Heart right ventricle (tissue), 16 donors: ENCODE measurements at regions of chr4 and their contacts with region 1.

Region 1: DNA sequence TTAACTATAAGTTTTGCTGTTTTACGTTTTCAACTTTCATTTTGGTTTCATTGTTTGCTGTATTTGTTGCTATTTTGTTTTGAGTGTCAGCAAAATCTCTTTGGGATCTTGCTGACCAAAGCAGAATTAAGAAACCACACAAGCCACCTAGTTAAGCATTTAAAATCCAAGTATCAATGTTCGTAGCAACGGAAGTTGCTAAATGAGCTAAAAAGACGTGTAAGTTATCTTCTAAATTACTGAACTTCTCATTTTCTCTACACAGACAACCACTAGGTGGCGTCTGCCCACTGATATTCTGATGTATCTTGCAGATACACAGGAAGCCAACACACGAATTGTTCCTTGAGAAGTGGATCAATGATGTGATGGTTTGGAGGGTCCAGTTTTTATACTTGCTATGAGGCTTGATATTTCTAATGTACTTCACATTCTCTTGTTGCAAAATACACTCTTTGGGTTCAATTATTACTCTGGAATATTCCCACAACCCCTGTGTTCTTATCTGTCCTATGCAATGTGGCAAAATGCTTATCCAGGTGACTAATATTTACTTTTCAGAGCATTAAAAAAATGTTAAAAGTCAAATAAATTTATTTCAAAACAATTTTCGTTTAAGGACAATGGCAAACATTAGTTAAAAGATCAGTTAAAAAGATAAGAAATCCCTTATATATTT is 250.5 kb downstream of the TECRL start:
- DNase-seq: peak in 1 of 2 donors; percentile 30
- ATAC-seq: no peak
- H3K4me3 ChIP-seq: peak overlapping the region in 5 of 10 donors; percentile 26 to 39 (median 29)
- H3K27ac ChIP-seq: no peak overlapping the region
- H3K4me1 ChIP-seq: no peaks in the 10 kb centered on the region
- H3K27me3 ChIP-seq: no peaks in the 10 kb centered on the region
- CTCF ChIP-seq: peak; percentile 31 to 85 (median 75)

Region 2: GRCh38 chr4:64271601-64272081 is 112.9 kb after region 1 on chr4:
- intact Hi-C with region 1: loop called in 1 of 10 experiments (anchors 10 kb)
- DNase-seq: peak; percentile 18 to 55
- ATAC-seq: peak; percentile 73 to 92 (median 86)
- H3K4me3 ChIP-seq: peak overlapping the region in 7 of 10 donors; percentile 10 to 42 (median 33)
- H3K27ac ChIP-seq: peak overlapping the region in 7 of 10 donors; percentile 29 to 52 (median 45)
- H3K4me1 ChIP-seq: peaks cover 0 to 24% (median 0%) of the 10 kb centered on the region in 9 donors
- H3K27me3 ChIP-seq: no peaks in the 10 kb centered on the region
- CTCF ChIP-seq: peak in 5 of 9 donors; percentile 11 to 35 (median 22)

Region 3: DNA sequence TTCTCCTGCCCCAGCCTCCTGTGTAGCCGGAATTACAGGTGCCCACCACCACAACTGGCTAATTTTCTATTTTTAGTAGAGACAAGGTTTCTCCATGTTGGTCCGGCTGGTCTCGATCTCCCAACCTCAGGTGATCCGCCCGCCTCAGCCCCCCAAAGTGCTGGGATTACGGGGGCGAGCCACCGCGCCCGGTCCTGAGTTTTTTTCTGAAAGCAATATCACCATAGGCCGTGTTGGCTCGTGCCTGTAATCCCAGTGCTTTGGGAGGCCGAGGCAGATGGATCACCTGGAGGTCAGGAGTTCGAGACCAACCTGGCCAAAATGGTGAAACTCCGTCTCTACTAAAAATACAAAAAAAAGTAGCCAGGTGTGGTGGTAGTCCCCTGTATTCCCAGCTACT is 386.8 kb after region 1 on chr4:
- intact Hi-C with region 1: loop called in 4 of 10 experiments (anchors 5 to 10 kb)
- DNase-seq: no peak
- ATAC-seq: no peak
- H3K4me3 ChIP-seq: no peak overlapping the region
- H3K27ac ChIP-seq: no peak overlapping the region
- H3K4me1 ChIP-seq: no peaks in the 10 kb centered on the region
- H3K27me3 ChIP-seq: no peaks in the 10 kb centered on the region
- CTCF ChIP-seq: no peak

Region 4: DNA sequence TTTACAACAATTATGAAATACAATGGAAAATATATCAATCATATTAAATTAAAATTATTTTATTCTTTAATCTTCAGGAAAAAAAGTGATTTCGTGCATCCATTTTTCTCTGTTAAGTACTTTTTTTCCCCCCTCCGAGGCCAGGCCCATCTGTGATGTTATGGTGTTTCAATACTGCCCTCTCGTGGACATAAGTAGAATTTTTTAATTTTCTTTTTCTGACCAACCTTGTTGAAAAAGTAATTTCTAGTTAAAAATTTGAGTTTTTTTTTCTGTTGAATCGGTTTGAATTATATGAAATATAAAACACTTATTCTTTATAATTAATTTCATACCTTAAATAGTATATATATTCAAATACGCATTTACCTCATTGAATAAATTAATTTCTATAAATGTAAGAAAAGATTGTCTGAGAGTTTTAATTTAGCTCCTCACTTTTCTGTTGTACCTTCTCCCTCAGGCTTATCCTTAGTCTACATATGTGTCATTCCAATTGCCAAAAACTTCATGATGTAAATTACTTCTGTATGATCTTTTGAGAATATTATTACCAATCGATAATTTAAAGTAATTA is 426.3 kb after region 1 on chr4:
- intact Hi-C with region 1: loop called in 2 of 10 experiments (anchors 10 kb)
- DNase-seq: no peak
- ATAC-seq: no peak
- H3K4me3 ChIP-seq: no peak overlapping the region
- H3K27ac ChIP-seq: no peak overlapping the region
- H3K4me1 ChIP-seq: no peaks in the 10 kb centered on the region
- H3K27me3 ChIP-seq: no peaks in the 10 kb centered on the region
- CTCF ChIP-seq: peak; percentile 51 to 70 (median 67)